ENCODE measurements at regions of chr1 and their contacts with region 1.

Region 1: DNA sequence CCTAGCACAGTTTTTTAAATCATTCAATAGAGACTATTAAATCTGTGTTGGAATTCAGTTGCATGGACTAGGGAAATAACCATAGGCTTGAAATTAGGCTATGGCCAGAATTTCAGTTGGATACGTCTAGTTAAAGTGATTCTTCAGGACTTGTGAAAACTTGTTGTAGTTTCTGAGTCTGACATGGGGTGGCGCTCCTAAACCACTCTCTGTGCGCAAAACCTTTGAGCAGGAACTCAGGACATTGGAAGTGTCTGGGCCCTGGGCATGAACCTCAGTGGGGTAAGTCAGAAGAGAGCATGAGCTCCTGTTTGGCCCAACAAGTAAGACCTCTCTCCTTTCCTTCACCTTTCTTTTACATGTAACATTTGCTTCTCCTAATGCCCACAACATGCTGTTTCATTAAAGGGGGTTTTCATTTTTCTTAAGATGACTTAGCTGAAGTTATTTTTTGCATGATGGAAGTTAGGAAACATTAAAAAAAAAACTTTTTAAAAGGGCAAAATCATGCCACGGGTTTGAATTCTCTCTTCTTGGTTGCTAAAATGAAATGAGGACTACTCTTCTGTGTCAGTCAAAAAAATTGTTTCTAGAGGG is 17.1 kb upstream of the CCDC190 start:
- DNase-seq: no peak

Region 2: DNA sequence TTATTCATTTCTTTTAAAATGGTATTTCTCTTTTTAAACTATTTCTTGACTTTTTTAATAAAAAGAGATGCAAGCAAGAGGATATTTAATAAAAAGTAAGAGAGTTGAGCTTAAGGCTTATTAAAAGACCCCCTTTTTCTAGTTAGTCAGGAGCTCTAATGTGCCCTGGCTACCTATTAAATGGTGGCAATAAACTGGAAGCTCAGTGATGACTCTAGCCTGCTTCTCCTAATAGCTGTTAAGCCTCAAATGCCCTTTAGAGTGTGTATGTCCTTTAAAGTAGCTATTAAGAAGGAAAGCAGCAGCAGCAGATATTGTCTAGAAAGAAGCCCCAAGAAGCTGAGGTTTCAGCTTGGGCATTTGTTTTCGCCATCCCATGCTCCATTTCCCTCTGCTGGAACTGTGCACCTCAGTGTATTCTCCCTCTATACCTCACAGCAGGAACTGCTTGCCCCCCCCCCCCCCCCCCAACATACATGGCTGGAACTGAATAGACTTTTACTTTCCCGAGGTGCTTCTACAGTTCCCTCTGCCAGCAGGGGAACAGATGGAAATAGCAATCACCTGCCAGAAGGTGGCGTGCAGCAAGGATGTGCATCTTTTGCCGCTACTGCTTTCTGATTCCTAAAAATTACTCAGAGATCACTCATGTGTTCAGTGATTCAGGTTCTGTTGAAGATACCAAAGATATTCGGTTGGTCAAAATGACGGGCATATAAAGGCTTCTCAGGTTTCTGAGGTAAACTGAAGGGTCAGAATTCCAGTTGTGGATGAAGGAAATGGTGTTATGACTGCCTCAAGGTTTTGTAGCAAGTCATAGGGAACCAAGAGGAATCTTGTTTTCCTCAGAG is 193.5 kb after region 1 on chr1:
- intact Hi-C with region 1: loop called (anchors 2 kb)
- DNase-seq: no peak